OCI-LY7 (cell line): ENCODE measurements at regions of chr22 and their contacts with region 1.

Region 1: DNA sequence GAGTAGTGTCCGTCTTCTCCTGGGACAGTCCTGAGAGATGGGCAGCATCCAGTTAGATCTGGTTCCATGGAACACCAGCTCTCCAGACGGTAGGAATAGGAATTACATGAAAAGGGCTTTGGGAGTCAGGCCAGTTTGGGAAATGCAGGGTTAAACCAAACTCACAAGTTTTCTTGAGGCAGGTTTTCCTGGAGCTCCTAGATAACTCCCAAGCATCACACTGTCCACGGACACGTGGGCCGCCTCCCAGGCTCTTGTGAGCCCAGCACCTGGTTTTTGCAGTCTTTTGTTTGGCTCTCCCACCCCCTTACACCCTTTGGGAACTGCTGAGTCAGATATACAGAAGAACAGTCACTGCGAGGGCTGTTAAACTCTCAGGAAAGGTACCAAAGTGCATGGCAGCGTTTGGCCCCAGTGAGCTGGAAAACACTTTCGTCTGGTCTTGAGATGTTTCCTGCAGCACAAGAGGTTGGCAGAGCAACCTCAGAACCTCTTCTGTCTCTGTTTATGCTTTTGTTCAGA is 90.0 kb downstream of the BCR start:
- DNase-seq: peak; percentile 64
- H3K4me3 ChIP-seq: peak overlapping the region; percentile 47
- H3K27ac ChIP-seq: peak overlapping the region; percentile 94
- H3K4me1 ChIP-seq: peaks cover 72% of the 10 kb centered on the region
- CTCF ChIP-seq: no peak; the same call in 1 of the 2 replicates

Region 2: DNA sequence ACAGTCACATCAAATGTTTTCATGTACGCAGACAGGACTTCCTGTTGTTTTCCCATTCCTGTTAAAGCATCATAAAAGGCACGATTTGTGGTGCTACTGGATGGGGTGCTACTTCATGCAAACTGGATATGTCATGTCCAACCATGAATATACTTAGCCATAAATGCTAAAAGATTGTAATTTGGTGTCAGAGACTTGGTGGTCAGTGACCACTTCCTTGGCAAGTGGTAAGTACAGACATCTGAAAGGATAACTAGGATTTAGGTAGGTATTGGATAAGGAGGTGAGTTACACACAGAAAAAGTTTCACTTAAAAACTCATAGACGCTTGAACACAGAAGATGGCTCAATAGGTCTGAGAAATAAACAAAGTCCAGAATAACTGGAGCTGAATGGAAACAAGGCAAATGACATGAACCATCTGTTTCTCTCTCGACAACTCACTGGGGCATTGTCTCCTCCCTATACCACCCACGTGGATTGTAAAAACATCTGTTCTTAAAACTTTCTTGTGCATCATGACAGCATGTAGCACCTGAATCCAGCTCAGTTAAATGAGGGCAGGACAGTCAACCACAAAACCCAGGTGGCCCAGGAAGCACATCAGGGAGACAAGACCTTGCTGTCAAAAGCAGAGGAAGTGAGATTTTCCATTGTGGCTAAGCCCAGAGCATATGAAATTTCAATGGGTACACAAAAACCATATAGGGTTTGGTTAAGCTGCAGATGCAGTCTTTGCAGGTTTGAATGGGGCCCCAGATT is 404.8 kb before region 1 on chr22:
- CTCF ChIA-PET with region 1: no interaction called
- POLR2A ChIA-PET with region 1: no interaction called
- intact Hi-C with region 1: loop called (anchors 5 kb)
- DNase-seq: peak; percentile 99
- H3K4me3 ChIP-seq: peak overlapping the region; percentile 32
- H3K27ac ChIP-seq: peak overlapping the region; percentile 92
- H3K4me1 ChIP-seq: peaks cover 92% of the 10 kb centered on the region
- CTCF ChIP-seq: no peak

Region 3: DNA sequence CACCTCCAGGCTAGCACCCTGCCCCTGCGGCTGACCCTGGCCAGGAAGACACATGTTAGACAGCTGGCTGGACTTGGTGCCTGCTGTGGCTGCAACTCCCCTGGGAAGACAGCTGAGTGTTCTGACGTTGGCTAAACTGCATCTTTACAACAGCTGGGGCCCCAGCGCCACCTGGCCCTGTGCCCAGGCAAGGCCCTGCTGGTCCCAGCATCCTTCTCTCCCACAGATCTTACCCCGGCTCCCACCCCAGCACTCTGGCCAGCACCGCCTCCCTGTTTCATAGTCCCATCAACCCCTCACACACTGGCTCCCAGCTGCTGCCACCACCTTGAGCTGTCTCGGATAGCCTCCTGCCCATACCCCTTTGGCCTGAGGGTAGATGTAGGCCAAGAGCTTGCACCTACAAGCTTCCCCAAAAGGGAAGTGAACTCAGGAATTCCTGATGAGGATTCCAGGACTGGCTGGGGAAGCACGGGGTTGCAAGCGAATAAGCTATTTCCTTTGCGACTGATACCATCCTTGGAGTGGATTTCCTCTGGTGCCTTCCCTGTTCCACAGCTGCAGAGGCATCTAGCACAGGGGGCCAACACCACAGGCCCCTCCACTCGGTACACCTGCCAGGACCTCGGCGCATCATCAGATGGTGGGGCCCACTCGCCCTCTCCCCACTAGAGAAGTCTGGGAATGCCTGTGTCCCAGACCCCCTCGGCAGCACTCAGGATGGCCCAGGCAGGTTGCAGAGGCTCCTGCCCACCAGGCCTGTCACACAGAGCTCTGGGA is 157.0 kb before region 1 on chr22:
- CTCF ChIA-PET with region 1: no interaction called
- POLR2A ChIA-PET with region 1: no interaction called
- intact Hi-C with region 1: no loop called
- DNase-seq: peak; percentile 84
- H3K4me3 ChIP-seq: no peak overlapping the region
- H3K27ac ChIP-seq: no peak overlapping the region
- H3K4me1 ChIP-seq: peaks cover 29% of the 10 kb centered on the region
- CTCF ChIP-seq: peak; percentile 48; the same call in 1 of the 2 replicates

Region 4: DNA sequence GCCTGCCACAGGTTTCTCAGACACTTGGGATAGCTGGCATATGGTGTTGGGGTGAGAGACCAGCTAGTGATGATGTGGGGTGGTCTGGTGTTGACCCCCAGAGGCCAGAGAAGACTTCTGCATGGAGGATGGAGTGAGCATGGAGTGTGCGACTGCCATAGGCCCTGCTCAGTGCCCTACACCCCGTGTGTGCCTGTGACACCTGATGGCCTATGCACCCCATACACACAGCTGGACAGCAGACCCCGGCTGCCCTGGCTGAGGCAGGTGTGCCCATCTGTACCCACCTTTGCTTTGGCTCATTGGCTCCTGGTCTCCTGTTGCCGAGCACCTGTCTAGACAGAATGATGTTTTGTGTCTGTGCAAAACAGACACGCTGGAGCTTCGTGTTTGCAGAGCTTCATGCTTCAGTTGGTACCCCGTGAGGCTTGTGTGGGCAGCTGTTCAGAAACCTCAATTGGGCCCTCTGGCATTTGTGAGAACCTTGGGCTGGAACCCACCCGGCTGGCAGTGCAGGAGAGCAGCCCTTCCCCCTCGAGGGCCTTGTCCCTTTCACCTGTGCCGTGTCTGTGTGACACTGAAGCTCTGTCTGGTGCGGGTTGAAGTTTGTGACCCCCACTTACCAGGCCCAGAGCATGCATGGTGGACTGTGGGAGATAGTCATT is 62.4 kb before region 1 on chr22:
- CTCF ChIA-PET with region 1: interaction called, 3 read pairs
- POLR2A ChIA-PET with region 1: interaction called, 3 read pairs
- intact Hi-C with region 1: loop called (anchors 1 kb)
- DNase-seq: peak; percentile 92
- H3K4me3 ChIP-seq: peak overlapping the region; percentile 21
- H3K27ac ChIP-seq: peak overlapping the region; percentile 82
- H3K4me1 ChIP-seq: peaks cover 66% of the 10 kb centered on the region
- CTCF ChIP-seq: no peak

Region 5: GRCh38 chr22:23219822-23220484 is 50.3 kb before region 1 on chr22:
- CTCF ChIA-PET with region 1: interaction called, 3 read pairs
- POLR2A ChIA-PET with region 1: interaction called, 8 read pairs
- intact Hi-C with region 1: loop called (anchors 1 kb)
- DNase-seq: peak; percentile 91
- H3K4me3 ChIP-seq: peak overlapping the region; percentile 65
- H3K27ac ChIP-seq: peak overlapping the region; percentile 83
- H3K4me1 ChIP-seq: peaks cover 59% of the 10 kb centered on the region
- CTCF ChIP-seq: no peak